HCT116 (cell line): ENCODE measurements at regions of chr3 and their contacts with region 1.

Region 1: GRCh38 chr3:182683453-182683852 is 109.9 kb upstream of the ATP11B start:
- DNase-seq: peak; percentile 51
- ATAC-seq: peak; percentile 92
- H3K4me3 ChIP-seq: no peak overlapping the region
- H3K27ac ChIP-seq: no peak overlapping the region
- H3K4me1 ChIP-seq: no peaks in the 10 kb centered on the region
- H3K27me3 ChIP-seq: no peaks in the 10 kb centered on the region
- CTCF ChIP-seq: peak; percentile 81 to 98 (median 88)
- POLR2A ChIP-seq: no peak
- RAD21 ChIP-seq: peak; percentile 95

Region 2: GRCh38 chr3:180802837-180803236 is 1880.6 kb before region 1 on chr3:
- CTCF ChIA-PET with region 1: no interaction called
- POLR2A ChIA-PET with region 1: no interaction called
- RAD21 ChIA-PET with region 1: no interaction called
- intact Hi-C with region 1: loop called (anchors 10 kb)
- DNase-seq: peak; percentile 3
- ATAC-seq: peak; percentile 49; the same call in 1 of the 2 replicates
- H3K4me3 ChIP-seq: no peak overlapping the region
- H3K27ac ChIP-seq: no peak overlapping the region
- H3K4me1 ChIP-seq: no peaks in the 10 kb centered on the region
- H3K27me3 ChIP-seq: peaks cover 16% of the 10 kb centered on the region; the same call in 1 of the 2 replicates
- CTCF ChIP-seq: peak; percentile 39 to 51 (median 48); a peak in 5 of 6 replicates
- POLR2A ChIP-seq: no peak
- RAD21 ChIP-seq: peak; percentile 69

Region 3: GRCh38 chr3:181210275-181210674 is 1473.2 kb before region 1 on chr3:
- CTCF ChIA-PET with region 1: interaction called, 8 read pairs
- POLR2A ChIA-PET with region 1: no interaction called
- RAD21 ChIA-PET with region 1: no interaction called
- intact Hi-C with region 1: loop called (anchors 2 kb)
- DNase-seq: peak; percentile 12
- ATAC-seq: no peak
- H3K4me3 ChIP-seq: no peak overlapping the region
- H3K27ac ChIP-seq: no peak overlapping the region
- H3K4me1 ChIP-seq: no peaks in the 10 kb centered on the region
- H3K27me3 ChIP-seq: peaks cover 33% of the 10 kb centered on the region
- CTCF ChIP-seq: peak in 2 of 3 experiments; percentile 35 to 38; a peak in 4 of 6 replicates
- POLR2A ChIP-seq: no peak
- RAD21 ChIP-seq: peak; percentile 54

Region 4: GRCh38 chr3:181326637-181327223 is 1356.7 kb before region 1 on chr3:
- CTCF ChIA-PET with region 1: interaction called, 10 read pairs
- POLR2A ChIA-PET with region 1: no interaction called
- RAD21 ChIA-PET with region 1: no interaction called
- intact Hi-C with region 1: loop called (anchors 1 kb)
- DNase-seq: peak; percentile 15
- ATAC-seq: peak; percentile 73; the same call in 1 of the 2 replicates
- H3K4me3 ChIP-seq: no peak overlapping the region
- H3K27ac ChIP-seq: no peak overlapping the region
- H3K4me1 ChIP-seq: no peaks in the 10 kb centered on the region
- H3K27me3 ChIP-seq: peaks cover 20% of the 10 kb centered on the region
- CTCF ChIP-seq: peak; percentile 34 to 75 (median 66); a peak in 5 of 6 replicates
- POLR2A ChIP-seq: no peak
- RAD21 ChIP-seq: peak; percentile 60

Region 5: GRCh38 chr3:181709537-181710279 is 973.7 kb before region 1 on chr3:
- CTCF ChIA-PET with region 1: no interaction called
- POLR2A ChIA-PET with region 1: no interaction called
- RAD21 ChIA-PET with region 1: no interaction called
- intact Hi-C with region 1: loop called (anchors 1 kb)
- DNase-seq: peak; percentile 29
- ATAC-seq: peak; percentile 60
- H3K4me3 ChIP-seq: peak overlapping the region; percentile 21 to 26
- H3K27ac ChIP-seq: no peak overlapping the region
- H3K4me1 ChIP-seq: peaks cover 11 to 16% of the 10 kb centered on the region in 2 experiments; a peak in 2 of 4 replicates
- H3K27me3 ChIP-seq: no peaks in the 10 kb centered on the region
- CTCF ChIP-seq: peak; percentile 49 to 78 (median 75)
- POLR2A ChIP-seq: no peak
- RAD21 ChIP-seq: peak; percentile 89

Region 6: DNA sequence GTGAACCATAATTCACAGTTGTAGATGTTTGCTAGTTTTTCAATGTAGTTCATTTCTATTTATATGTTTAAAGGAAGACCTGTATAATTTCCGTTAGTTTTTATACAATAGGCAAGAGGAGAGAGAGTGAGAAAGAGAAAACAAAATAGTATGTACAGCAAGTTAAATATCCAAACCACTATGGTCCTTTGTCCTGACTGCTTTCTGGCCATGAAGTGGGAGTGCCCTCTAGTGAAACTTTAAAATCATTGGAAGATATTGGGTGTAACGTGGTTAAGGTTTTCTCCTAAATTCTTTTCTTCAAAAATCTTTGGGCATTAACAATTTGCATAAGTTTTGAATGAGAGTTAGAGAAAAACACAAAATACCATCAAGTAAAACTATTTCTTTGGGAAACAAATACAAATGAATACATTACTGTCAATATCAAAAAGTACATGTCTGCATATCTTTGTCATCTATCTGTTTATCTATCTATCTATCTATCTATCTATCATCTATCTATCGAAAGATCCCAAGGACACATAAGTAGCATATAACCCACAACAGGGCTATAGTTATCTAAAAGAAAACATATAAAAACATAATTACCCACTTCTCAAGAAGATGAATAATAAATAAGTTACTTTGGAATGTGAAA is 424.8 kb before region 1 on chr3:
- CTCF ChIA-PET with region 1: no interaction called
- POLR2A ChIA-PET with region 1: no interaction called
- RAD21 ChIA-PET with region 1: no interaction called
- intact Hi-C with region 1: loop called (anchors 5 kb)
- DNase-seq: peak; percentile 31
- ATAC-seq: peak; percentile 73
- H3K4me3 ChIP-seq: no peak overlapping the region
- H3K27ac ChIP-seq: no peak overlapping the region
- H3K4me1 ChIP-seq: no peaks in the 10 kb centered on the region
- H3K27me3 ChIP-seq: no peaks in the 10 kb centered on the region
- CTCF ChIP-seq: peak; percentile 60 to 72 (median 68); a peak in 5 of 6 replicates
- POLR2A ChIP-seq: no peak
- RAD21 ChIP-seq: peak; percentile 93

Region 7: GRCh38 chr3:182490596-182491491 is 192.6 kb before region 1 on chr3:
- CTCF ChIA-PET with region 1: no interaction called
- POLR2A ChIA-PET with region 1: no interaction called
- RAD21 ChIA-PET with region 1: no interaction called
- intact Hi-C with region 1: loop called (anchors 2 kb)
- DNase-seq: peak; percentile 40
- ATAC-seq: peak; percentile 85
- H3K4me3 ChIP-seq: no peak overlapping the region
- H3K27ac ChIP-seq: no peak overlapping the region
- H3K4me1 ChIP-seq: no peaks in the 10 kb centered on the region
- H3K27me3 ChIP-seq: no peaks in the 10 kb centered on the region
- CTCF ChIP-seq: peak; percentile 54 to 72 (median 55)
- POLR2A ChIP-seq: no peak
- RAD21 ChIP-seq: peak; percentile 74